ENCODE measurements at regions of chr9 and their contacts with region 1.

Region 1: GRCh38 chr9:124794902-124795491 is 18.1 kb downstream of the OLFML2A start:
- DNase-seq: no peak
- H3K4me3 ChIP-seq: no peak overlapping the region
- H3K27ac ChIP-seq: no peak overlapping the region
- H3K4me1 ChIP-seq: peaks cover 11% of the 10 kb centered on the region
- H3K27me3 ChIP-seq: peaks cover 2 to 3% of the 10 kb centered on the region in 2 experiments
- CTCF ChIP-seq: no peak
- POLR2A ChIP-seq: no peak

Region 2: DNA sequence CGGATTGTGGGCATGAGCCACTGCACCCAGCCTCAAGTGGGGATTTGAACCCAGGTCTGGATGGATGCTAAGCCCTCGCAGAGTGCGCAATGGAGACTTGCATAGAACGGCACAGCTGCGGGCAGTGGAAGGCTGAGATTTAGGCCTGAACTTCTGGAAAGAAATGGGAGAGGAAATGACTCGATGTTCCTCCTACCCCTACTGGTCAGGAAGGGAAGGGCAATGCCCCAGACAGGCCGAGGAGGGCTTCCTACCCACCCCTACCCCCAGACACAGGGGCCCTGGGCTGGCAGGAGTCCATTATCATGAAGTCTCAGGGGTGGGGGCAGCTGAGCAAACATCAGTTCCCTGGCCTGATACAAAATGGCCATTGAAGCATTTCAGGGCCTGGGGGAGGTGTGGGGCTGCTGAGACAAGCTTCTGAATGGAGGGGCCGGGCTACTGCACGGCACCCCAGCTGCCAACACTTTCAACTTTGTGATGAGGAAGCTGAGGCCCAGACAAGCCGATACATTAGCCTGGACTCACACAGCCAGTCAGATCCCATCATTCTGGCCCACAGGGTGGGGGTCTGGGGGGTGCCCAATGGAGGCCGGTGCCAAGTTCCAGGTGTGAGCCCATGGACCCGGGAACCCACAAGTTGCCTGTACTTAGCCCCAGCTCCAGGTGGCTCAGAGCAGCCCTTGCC is 44.8 kb after region 1 on chr9:
- CTCF ChIA-PET with region 1: interaction called, 5 read pairs
- POLR2A ChIA-PET with region 1: no interaction called
- dilution Hi-C with region 1: no loop called
- intact Hi-C with region 1: loop called (anchors 2 kb)
- DNase-seq: peak; percentile 62
- H3K4me3 ChIP-seq: no peak overlapping the region
- H3K27ac ChIP-seq: no peak overlapping the region
- H3K4me1 ChIP-seq: peaks cover 6% of the 10 kb centered on the region
- H3K27me3 ChIP-seq: no peaks in the 10 kb centered on the region
- CTCF ChIP-seq: peak; percentile 41 to 73
- POLR2A ChIP-seq: no peak

Region 3: DNA sequence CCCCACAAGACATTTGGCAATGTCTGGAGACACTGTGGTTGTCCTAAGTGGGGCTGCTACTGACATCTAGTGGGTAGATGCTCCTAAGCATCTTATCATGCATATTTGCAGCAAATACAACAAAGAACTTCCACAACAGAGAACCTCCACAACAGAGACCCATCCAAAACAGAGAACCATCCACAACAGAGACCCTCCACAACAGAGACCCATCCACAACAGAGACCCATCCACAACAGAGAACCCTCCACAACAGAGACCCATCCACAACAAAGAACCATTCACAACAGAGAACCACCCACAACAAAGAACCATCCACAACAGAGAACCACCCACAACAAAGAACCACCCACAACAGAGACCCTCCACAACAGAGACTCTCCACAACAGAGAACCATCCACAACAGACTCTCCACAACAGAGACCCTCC is 99.8 kb after region 1 on chr9:
- CTCF ChIA-PET with region 1: no interaction called
- POLR2A ChIA-PET with region 1: no interaction called
- dilution Hi-C with region 1: no loop called
- intact Hi-C with region 1: no loop called
- DNase-seq: peak; percentile 57
- H3K4me3 ChIP-seq: no peak overlapping the region
- H3K27ac ChIP-seq: no peak overlapping the region
- H3K4me1 ChIP-seq: no peaks in the 10 kb centered on the region
- H3K27me3 ChIP-seq: no peaks in the 10 kb centered on the region
- CTCF ChIP-seq: peak; percentile 43 to 58
- POLR2A ChIP-seq: no peak

Region 4: GRCh38 chr9:124983698-124984097 is 188.7 kb after region 1 on chr9:
- CTCF ChIA-PET with region 1: no interaction called
- POLR2A ChIA-PET with region 1: no interaction called
- dilution Hi-C with region 1: no loop called
- intact Hi-C with region 1: no loop called
- DNase-seq: no peak
- H3K4me3 ChIP-seq: no peak overlapping the region
- H3K27ac ChIP-seq: no peak overlapping the region
- H3K4me1 ChIP-seq: no peaks in the 10 kb centered on the region
- H3K27me3 ChIP-seq: no peaks in the 10 kb centered on the region
- CTCF ChIP-seq: no peak
- POLR2A ChIP-seq: no peak

Measured in endothelial cell of umbilical vein (primary cell).